Right cardiac atrium (tissue), 5 donors: ENCODE measurements at regions of chr2 and their contacts with region 1.

Region 1: GRCh38 chr2:229800997-229801754 is 86.8 kb upstream of the DNER start:
- DNase-seq: peak in 2 of 3 donors; percentile 39 to 72
- ATAC-seq: peak; percentile 48 to 73
- H3K4me3 ChIP-seq: no peak overlapping the region
- H3K27ac ChIP-seq: no peak overlapping the region
- H3K4me1 ChIP-seq: peaks cover 2% of the 10 kb centered on the region
- H3K27me3 ChIP-seq: no peaks in the 10 kb centered on the region

Region 2: GRCh38 chr2:229921892-229922445 is 120.8 kb after region 1 on chr2 and contains the start of gene TRIP12:
- intact Hi-C with region 1: loop called in 2 of 4 experiments (anchors 5 to 10 kb)
- DNase-seq: peak; percentile 94 to 97 (median 96)
- ATAC-seq: peak; percentile 95
- H3K4me3 ChIP-seq: peak within 1 kb of the TSS; percentile 89
- H3K27ac ChIP-seq: peak within 1 kb of the TSS; percentile 99
- H3K4me1 ChIP-seq: no peaks in the 10 kb centered on the region
- H3K27me3 ChIP-seq: no peaks in the 10 kb centered on the region
- total RNA-seq, gene TRIP12: 190 to 212 (median 205) TPM